ENCODE measurements at regions of chr6 and their contacts with region 1.

Region 1: GRCh38 chr6:33761922-33762629 is 15.4 kb upstream of the IP6K3 start:
- DNase-seq: peak; percentile 80 to 97
- ATAC-seq: peak; percentile 95 to 97 (median 95)
- H3K4me3 ChIP-seq: peak overlapping the region; percentile 41
- H3K27ac ChIP-seq: peak overlapping the region; percentile 75
- H3K4me1 ChIP-seq: peaks cover 21% of the 10 kb centered on the region
- H3K27me3 ChIP-seq: no peaks in the 10 kb centered on the region
- CTCF ChIP-seq: peak; percentile 75

Region 2: DNA sequence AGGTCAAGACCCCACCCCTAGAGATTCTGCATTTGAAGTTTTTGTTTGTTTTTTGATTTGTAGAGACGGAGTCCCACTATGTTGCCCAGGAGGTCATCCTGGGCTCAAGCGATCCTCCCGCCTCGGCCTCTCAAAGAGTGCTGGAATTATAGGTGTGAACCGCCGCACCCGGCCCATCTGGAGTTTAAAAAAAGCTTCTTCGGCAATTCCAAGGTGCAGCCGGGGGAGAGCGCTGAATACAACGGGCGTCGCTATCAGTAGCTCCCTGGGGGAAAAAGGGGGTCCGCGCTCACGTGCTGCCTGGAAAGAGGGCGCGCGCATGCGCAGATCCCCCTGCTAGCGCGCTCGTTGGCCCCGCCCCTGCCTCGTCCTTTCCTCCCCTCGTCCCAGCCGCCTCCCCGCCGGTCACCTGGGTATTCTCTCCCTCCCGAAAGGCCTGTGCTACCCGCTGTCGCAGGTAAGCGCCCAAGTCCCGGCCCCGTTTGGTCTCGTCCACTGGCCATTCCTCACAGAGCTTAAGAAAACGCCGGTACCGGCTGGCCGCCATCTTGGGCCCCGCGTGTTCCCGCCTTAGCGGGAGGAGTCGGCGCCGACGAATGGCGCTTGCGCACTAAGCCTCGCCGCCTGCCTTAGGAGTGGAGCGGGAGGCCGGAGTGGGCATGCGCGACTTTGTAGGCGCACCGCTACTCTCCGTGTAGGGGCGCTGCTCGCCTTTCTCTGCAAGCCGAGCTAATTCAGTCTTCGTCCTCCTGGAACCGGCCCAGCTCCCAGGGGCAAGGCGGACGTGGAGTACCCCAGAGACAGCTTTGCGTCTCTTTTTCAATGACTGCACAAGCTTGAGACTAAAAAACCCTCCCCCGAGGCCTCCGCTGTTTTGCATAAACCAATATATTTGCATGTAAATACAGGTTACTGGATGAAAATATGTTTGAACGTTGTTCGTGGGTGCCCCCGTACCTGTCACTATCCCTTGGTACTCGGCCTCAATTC is 50.6 kb before region 1 on chr6 and contains the start of gene UQCC2:
- intact Hi-C with region 1: loop called (anchors 1 to 2 kb)
- DNase-seq: peak; percentile 98 to 99
- ATAC-seq: peak; percentile 96 to 98 (median 98)
- H3K4me3 ChIP-seq: peak within 1 kb of the TSS; percentile 92
- H3K27ac ChIP-seq: peak within 1 kb of the TSS; percentile 98
- H3K4me1 ChIP-seq: peaks cover 27% of the 10 kb centered on the region
- H3K27me3 ChIP-seq: no peaks in the 10 kb centered on the region
- CTCF ChIP-seq: peak; percentile 78
- total RNA-seq, gene UQCC2: 118 to 184 (median 145) TPM

Region 3: DNA sequence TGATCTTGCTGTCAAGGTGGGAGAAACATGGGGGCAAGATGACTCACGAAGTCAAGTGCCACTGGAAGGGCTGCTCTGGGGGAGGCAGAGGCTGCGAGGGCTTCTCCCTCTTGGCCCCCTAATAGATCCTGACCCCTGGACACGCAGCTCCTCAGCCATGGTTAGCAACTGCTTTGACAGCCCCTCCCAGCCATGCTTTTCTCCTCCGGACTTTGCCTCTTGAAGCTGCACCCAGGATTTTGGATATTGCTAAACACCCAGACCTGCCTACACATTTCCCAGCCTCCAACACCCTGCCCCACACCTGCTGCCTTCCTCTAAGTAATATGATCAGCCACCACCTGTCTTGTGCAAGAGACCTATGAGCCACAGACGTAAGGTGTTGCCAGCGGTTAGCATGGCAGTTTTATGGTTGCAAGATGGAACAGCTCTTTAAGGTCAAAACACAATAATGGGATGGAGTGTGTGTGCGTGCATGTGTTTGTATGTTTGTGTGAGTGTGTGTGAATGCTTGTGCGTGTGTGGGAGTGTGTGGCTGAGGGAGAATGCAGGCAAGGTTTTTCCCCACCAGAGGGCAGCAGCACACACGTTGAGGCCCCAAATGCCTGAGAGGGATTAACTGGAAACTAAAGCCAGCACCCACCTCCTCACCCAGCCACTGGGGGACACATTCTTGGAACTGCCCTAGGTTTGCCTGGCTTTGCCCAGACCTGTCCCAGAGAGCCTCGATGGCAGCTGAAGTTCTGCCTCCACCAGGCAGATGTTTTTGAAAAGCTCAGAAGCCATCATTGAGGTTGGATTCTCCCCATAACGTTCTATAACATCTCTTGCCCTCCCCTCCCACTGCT is 17.9 kb before region 1 on chr6:
- intact Hi-C with region 1: loop called in 1 of 2 experiments (anchors 1 kb)
- DNase-seq: peak; percentile 83 to 93
- ATAC-seq: peak; percentile 31 to 39 (median 38)
- H3K4me3 ChIP-seq: peak overlapping the region; percentile 72
- H3K27ac ChIP-seq: peak overlapping the region; percentile 100
- H3K4me1 ChIP-seq: peaks cover 24% of the 10 kb centered on the region
- H3K27me3 ChIP-seq: no peaks in the 10 kb centered on the region
- CTCF ChIP-seq: peak; percentile 89

Region 4: DNA sequence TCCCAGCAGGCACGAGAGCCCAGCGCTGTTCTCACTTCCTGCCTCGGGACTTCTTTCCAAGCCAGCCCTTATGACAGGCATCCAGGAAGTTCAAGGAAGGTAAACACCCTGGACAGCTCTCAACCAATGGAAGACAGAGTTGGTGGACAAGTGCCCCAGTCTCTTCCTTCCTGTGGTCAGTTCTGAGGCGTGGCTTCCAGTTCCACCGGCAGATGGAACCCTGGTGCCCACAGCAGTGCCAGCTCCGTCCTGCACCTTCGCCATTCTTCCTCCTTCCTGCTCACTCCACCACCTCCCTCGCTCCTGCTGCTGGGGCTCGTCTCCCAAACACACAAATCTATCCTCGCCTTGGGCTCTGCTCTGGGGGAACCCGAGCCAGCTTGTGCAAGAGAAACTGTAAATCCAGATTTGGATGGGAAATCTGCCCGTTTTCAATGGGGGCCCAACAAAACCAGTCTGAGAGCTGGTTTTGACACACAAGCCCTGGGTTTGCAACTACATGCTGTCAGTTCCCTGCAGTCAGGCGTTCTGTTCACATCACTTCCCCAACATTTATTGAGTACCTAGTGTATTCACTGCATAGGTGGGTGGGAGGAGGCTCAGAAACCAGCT is 221.1 kb after region 1 on chr6:
- intact Hi-C with region 1: no loop called
- DNase-seq: no peak
- ATAC-seq: peak; percentile 52 to 69 (median 62)
- H3K4me3 ChIP-seq: no peak overlapping the region
- H3K27ac ChIP-seq: no peak overlapping the region
- H3K4me1 ChIP-seq: no peaks in the 10 kb centered on the region
- H3K27me3 ChIP-seq: peaks cover 0 to 5% (median 3%) of the 10 kb centered on the region in 3 donors
- CTCF ChIP-seq: no peak

Measured in psoas muscle (tissue), 8 donors.